ENCODE measurements at regions of chr10 and their contacts with region 1.

Region 1: GRCh38 chr10:61164458-61165160 is 220.6 kb upstream of the RHOBTB1 start:
- DNase-seq: peak; percentile 91 to 92
- ATAC-seq: peak; percentile 84
- H3K4me3 ChIP-seq: peak overlapping the region in 1 of 4 donors; percentile 9
- H3K27ac ChIP-seq: peak overlapping the region; percentile 88 to 96 (median 92)
- H3K4me1 ChIP-seq: peaks cover 34 to 39% of the 10 kb centered on the region in 2 donors
- H3K27me3 ChIP-seq: no peaks in the 10 kb centered on the region
- CTCF ChIP-seq: no peak
- POLR2A ChIP-seq: no peak

Region 2: GRCh38 chr10:59753267-59753666 is 1411.3 kb before region 1 on chr10 and contains the start of gene MRLN:
- in situ Hi-C with region 1: no loop called
- intact Hi-C with region 1: loop called (anchors 2 kb)
- DNase-seq: peak; percentile 45 to 56
- ATAC-seq: peak; percentile 91 to 95
- H3K4me3 ChIP-seq: peak within 1 kb of the TSS; percentile 40 to 64 (median 63)
- H3K27ac ChIP-seq: peak within 1 kb of the TSS; percentile 84 to 93 (median 89)
- H3K4me1 ChIP-seq: peaks cover 29 to 32% of the 10 kb centered on the region in 2 donors
- H3K27me3 ChIP-seq: no peaks in the 10 kb centered on the region
- CTCF ChIP-seq: no peak
- POLR2A ChIP-seq: peak; percentile 68 to 86
- total RNA-seq, gene MRLN: 67.7 to 352 (median 188) TPM

Region 3: DNA sequence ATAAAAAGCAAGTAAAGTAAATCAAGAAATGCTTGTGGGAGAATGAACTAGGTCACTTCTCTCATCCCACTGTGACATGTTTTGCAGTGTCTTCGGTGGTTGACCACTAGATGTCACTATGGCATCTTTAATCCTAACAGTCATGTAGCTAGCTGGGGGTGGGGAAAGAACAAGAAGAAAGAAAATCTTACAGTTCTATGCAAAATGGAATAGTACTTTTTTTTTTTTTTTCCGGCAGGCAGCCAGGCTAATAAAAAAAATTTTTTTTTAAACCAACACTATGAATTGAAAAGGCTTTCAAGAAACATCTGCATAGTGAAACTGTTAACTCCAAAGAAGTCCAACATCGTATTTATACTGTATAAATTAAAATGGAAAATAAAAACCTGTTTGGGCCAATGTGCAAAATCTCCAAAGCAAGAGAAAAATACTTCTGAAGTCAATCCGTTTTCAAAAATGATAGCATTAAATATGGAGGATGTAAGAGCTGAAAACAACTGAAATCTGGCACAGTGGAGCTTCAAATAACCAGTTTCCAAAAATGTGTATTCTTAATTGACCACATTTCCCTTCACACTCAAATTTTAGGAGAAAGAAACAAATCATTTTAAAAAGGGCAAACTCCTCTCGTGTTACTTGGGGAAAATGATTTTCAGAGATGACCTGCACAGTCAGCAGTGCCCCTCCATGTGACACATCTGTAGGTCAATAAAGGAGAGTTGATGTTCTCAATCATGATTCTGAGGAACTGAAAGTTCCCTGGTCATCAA is 347.8 kb before region 1 on chr10:
- in situ Hi-C with region 1: no loop called
- intact Hi-C with region 1: loop called (anchors 10 kb)
- DNase-seq: peak; percentile 25 to 39
- ATAC-seq: peak; percentile 93 to 94
- H3K4me3 ChIP-seq: peak overlapping the region in 1 of 4 donors; percentile 19
- H3K27ac ChIP-seq: peak overlapping the region in 3 of 4 donors; percentile 14 to 27 (median 19)
- H3K4me1 ChIP-seq: peaks cover 22 to 26% of the 10 kb centered on the region in 2 donors
- H3K27me3 ChIP-seq: no peaks in the 10 kb centered on the region
- CTCF ChIP-seq: peak; percentile 72 to 86 (median 82)
- POLR2A ChIP-seq: no peak

Region 4: DNA sequence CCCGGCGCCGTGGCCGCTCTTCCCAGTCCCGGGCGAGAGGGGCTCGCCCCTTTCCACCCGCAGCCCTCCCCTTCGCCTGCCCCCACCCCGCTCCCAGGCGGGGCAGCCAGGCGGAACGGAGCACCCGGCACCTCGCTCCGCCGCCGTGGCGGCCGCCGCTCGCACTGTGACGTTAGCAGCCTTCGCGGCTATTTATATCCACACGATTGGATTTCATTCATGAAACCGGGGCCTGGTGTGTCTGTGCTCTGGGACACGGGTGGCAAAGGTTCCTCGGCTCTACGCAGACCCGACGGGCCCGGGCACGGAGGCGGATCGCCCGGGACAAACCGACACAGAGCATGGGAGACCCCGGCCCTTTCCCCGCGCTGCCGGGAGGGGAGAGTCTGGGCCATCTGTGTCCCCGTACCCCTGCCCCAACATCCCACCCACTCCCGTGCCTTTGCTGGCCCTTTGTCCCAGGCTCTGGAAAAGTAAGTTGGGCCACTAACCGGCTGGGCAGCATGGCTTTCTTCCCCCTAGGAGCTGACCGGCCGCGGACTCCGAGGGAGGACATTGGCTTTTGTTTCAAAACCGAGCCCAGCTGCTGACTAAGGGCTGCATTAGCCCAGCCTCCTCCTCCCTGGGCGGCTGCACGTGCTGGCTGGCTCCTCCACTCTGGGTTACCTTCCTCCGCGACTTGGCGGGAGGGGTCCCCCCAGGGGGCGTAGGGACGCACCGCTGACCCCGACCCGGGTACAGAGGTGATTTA is 220.3 kb before region 1 on chr10 and contains the start of gene RHOBTB1:
- in situ Hi-C with region 1: no loop called
- intact Hi-C with region 1: loop called (anchors 2 kb)
- DNase-seq: peak; percentile 72 to 87
- ATAC-seq: peak; percentile 84 to 87
- H3K4me3 ChIP-seq: peak within 1 kb of the TSS; percentile 87 to 93 (median 90)
- H3K27ac ChIP-seq: peak within 1 kb of the TSS; percentile 97 to 100 (median 99)
- H3K4me1 ChIP-seq: peaks cover 27 to 44% of the 10 kb centered on the region in 2 donors
- H3K27me3 ChIP-seq: no peaks in the 10 kb centered on the region
- CTCF ChIP-seq: no peak
- POLR2A ChIP-seq: peak; percentile 97 to 98
- total RNA-seq, gene RHOBTB1: 22.2 to 47.7 (median 33.5) TPM

Region 5: DNA sequence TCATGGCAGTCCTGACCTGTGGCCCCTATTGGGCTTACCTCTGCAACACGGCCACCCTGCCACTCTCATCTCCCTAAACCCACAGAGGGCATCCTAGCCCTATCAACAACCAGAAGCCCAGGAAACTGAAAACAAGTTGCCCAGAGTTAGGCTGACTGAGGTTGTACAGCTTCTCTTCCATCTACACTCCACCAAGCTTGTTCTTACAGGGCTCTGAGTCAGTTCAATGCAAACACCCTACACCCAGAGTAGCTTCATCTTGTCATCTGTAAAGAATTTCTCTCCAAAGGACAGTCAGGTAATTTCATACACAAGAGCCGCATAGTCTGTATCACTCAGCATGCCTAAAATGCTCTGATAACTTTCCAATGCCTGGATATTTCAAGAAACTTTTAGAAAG is 912.3 kb after region 1 on chr10:
- in situ Hi-C with region 1: no loop called
- intact Hi-C with region 1: loop called (anchors 10 kb)
- DNase-seq: no peak
- ATAC-seq: peak; percentile 8 to 42
- H3K4me3 ChIP-seq: peak overlapping the region in 1 of 4 donors; percentile 22
- H3K27ac ChIP-seq: peak overlapping the region; percentile 95 to 99 (median 96)
- H3K4me1 ChIP-seq: peaks cover 98 to 99% of the 10 kb centered on the region in 2 donors
- H3K27me3 ChIP-seq: no peaks in the 10 kb centered on the region
- CTCF ChIP-seq: no peak
- POLR2A ChIP-seq: no peak

Measured in gastrocnemius medialis (tissue), 4 donors.